ENCODE measurements at regions of chr2 and their contacts with region 1.

Region 1: DNA sequence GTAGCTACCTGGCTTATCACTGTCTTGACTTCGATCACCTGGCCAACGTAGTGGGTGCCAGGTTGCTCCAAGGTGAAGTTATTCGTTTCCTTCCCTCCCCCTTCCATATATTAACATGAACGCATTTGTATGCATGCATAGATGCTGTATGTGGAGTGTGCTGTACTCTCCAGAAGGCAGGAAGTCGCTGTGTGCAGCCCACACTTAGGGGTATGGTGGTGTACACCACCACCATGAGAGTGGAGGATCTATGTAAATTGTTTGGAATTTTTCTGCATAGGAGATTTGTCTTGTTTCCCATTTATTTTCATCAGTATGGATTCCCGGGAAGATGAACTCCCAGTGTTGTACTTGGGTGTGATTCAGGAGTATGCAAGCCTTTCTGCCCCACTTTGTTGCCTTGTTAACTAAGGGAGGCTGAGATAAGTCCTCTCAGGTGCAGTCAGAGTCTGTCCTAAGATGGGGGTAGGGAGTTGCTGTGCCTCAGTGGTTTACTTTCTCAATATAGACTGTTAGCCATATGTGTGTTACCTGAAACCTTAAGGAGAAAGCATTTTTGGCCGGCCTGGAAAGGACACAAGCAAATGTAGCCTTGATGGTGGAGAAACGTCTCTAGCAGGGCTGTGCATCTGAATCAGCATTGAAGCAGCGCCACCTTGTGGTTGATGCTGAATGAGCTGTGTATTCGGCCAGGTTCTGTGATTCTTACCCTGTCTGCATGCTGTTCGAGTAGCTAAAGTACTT is 149.8 kb downstream of the TANC1 start:
- DNase-seq: peak; percentile 77 to 89
- ATAC-seq: peak; percentile 81 to 97 (median 92)
- H3K4me3 ChIP-seq: no peak overlapping the region
- H3K4me3 Mint-ChIP-seq: no peak overlapping the region
- H3K27ac ChIP-seq: no peak overlapping the region
- H3K27ac Mint-ChIP-seq: no peak overlapping the region
- H3K4me1 ChIP-seq: peaks cover 8% of the 10 kb centered on the region
- H3K4me1 Mint-ChIP-seq: peaks cover 12 to 19% of the 10 kb centered on the region in 2 donors
- H3K27me3 ChIP-seq: no peaks in the 10 kb centered on the region
- H3K27me3 Mint-ChIP-seq: peaks cover 3 to 5% of the 10 kb centered on the region in 2 donors
- CTCF ChIP-seq: peak; percentile 94

Region 2: DNA sequence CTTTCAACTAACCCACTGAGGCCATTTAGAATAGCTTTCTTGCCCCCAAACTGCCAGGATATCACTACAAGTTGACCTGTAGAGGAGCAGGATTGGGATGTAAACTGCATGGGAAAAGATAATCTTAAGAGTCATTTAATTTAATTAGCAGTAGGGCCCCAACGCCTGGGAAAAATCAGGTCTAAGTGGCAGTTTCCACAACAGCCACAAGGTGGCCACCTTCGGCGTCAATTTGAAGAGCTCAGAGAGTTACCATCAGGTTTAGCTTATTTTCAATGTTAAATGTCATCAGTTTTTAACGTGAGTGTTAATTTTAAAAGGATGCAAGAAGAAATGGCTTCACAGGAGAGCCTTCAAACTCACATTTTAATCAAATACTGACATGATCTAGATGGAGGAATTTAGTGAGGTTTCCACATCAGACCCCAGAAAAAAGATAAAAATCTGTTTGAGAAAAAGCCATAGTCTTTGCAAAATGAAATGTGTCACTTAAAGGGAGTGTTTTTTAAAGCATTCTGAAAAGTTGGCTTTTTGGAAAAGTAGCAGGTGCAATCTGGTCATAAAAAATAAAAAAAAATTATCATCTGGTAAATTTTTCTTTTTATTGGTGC is 1093.9 kb before region 1 on chr2:
- intact Hi-C with region 1: loop called (anchors 5 kb)
- DNase-seq: peak in 1 of 2 donors; percentile 69
- ATAC-seq: peak in 2 of 3 donors; percentile 48 to 62
- H3K4me3 ChIP-seq: no peak overlapping the region
- H3K4me3 Mint-ChIP-seq: no peak overlapping the region
- H3K27ac ChIP-seq: no peak overlapping the region
- H3K27ac Mint-ChIP-seq: no peak overlapping the region
- H3K4me1 ChIP-seq: no peaks in the 10 kb centered on the region
- H3K4me1 Mint-ChIP-seq: no peaks in the 10 kb centered on the region
- H3K27me3 ChIP-seq: no peaks in the 10 kb centered on the region
- H3K27me3 Mint-ChIP-seq: no peaks in the 10 kb centered on the region
- CTCF ChIP-seq: peak; percentile 77

Region 3: GRCh38 chr2:158773121-158773520 is 345.2 kb before region 1 on chr2:
- intact Hi-C with region 1: no loop called
- DNase-seq: no peak
- ATAC-seq: no peak
- H3K4me3 ChIP-seq: no peak overlapping the region
- H3K4me3 Mint-ChIP-seq: no peak overlapping the region
- H3K27ac ChIP-seq: no peak overlapping the region
- H3K27ac Mint-ChIP-seq: no peak overlapping the region
- H3K4me1 ChIP-seq: no peaks in the 10 kb centered on the region
- H3K4me1 Mint-ChIP-seq: no peaks in the 10 kb centered on the region
- H3K27me3 ChIP-seq: no peaks in the 10 kb centered on the region
- H3K27me3 Mint-ChIP-seq: peaks cover 0 to 10% of the 10 kb centered on the region in 2 donors
- CTCF ChIP-seq: no peak

Region 4: GRCh38 chr2:159035790-159036411 is 82.4 kb before region 1 on chr2:
- intact Hi-C with region 1: loop called (anchors 1 kb)
- DNase-seq: peak in 1 of 2 donors; percentile 58
- ATAC-seq: peak in 1 of 3 donors; percentile 52
- H3K4me3 ChIP-seq: no peak overlapping the region
- H3K4me3 Mint-ChIP-seq: no peak overlapping the region
- H3K27ac ChIP-seq: no peak overlapping the region
- H3K27ac Mint-ChIP-seq: no peak overlapping the region
- H3K4me1 ChIP-seq: no peaks in the 10 kb centered on the region
- H3K4me1 Mint-ChIP-seq: no peaks in the 10 kb centered on the region
- H3K27me3 ChIP-seq: no peaks in the 10 kb centered on the region
- H3K27me3 Mint-ChIP-seq: peaks cover 9 to 10% of the 10 kb centered on the region in 2 donors
- CTCF ChIP-seq: no peak

Region 5: DNA sequence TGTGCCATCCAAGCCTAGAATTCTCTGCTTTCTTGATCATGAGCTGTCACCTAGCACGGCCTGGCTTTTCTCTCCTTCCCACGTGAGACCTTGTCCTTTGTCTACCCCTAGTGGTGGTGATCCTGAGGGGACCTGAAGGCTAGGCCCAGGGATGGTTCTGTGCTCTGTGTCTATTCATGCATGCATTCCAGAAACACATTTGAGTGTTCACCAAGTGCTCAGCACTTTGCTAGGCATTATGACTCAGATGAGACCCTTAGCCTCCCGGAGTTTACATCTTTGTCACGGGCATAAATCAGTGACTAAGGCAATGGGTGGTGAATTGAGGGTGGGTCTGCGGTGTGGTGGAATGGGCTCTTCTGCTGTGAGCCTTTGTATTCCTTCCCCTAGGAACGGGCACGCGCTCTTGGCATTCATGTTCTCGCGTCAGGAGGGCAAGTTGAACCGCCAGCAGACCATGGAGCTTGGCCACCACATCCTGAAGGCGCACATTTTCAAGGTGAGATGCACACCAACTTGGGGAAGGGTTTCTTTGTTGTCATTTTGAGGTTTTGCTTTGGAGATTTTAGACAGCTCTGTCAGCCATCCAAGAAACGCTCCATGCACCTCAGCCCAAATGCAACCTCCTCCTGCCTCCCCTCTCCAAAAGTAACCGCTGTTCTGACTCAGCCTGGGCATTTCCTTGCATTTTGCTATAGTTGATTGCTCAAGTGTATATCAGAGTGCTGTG is 67.3 kb after region 1 on chr2:
- intact Hi-C with region 1: loop called (anchors 2 kb)
- DNase-seq: peak in 1 of 2 donors; percentile 59
- ATAC-seq: peak; percentile 65 to 93 (median 87)
- H3K4me3 ChIP-seq: no peak overlapping the region
- H3K4me3 Mint-ChIP-seq: no peak overlapping the region
- H3K27ac ChIP-seq: no peak overlapping the region
- H3K27ac Mint-ChIP-seq: peak overlapping the region in 1 of 2 donors; percentile 49
- H3K4me1 ChIP-seq: peaks cover 10% of the 10 kb centered on the region
- H3K4me1 Mint-ChIP-seq: peaks cover 18 to 32% of the 10 kb centered on the region in 2 donors
- H3K27me3 ChIP-seq: no peaks in the 10 kb centered on the region
- H3K27me3 Mint-ChIP-seq: peaks cover 0 to 3% of the 10 kb centered on the region in 2 donors
- CTCF ChIP-seq: peak; percentile 52

Region 6: DNA sequence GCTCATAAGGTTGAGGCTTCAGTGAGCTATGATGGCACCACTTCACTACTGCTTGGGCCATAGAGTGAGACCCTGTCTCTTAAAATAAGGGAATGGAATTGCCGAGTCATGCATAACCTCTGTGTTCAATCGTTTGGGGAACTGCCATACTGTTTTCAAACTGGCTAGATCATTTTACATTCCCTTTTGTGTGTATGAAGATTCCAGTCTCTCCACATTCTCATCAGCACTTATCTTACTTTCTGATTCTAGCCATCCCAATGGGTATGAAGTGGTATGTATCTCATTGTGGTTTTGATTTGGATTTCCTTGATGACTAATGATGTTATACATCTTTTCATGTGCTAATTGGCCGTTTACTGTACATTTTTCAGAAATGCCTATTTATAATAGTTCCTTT is 617.8 kb after region 1 on chr2:
- intact Hi-C with region 1: no loop called
- DNase-seq: no peak
- ATAC-seq: no peak
- H3K4me3 ChIP-seq: no peak overlapping the region
- H3K4me3 Mint-ChIP-seq: no peak overlapping the region
- H3K27ac ChIP-seq: no peak overlapping the region
- H3K27ac Mint-ChIP-seq: peak overlapping the region; percentile 49 to 71
- H3K4me1 ChIP-seq: no peaks in the 10 kb centered on the region
- H3K4me1 Mint-ChIP-seq: peaks cover 36 to 41% of the 10 kb centered on the region in 2 donors
- H3K27me3 ChIP-seq: no peaks in the 10 kb centered on the region
- H3K27me3 Mint-ChIP-seq: no peaks in the 10 kb centered on the region
- CTCF ChIP-seq: no peak